Natural killer cell (primary cell): ENCODE measurements at regions of chr1 and their contacts with region 1.

Region 1: GRCh38 chr1:229625915-229626831 is at the starts of genes TAF5L and URB2:
- DNase-seq: peak; percentile 81 to 93
- ATAC-seq: peak; percentile 93 to 97 (median 93)
- H3K4me3 ChIP-seq: peak within 1 kb of the TSS; percentile 85
- H3K4me3 Mint-ChIP-seq: peak within 1 kb of the TSS; percentile 99
- H3K27ac ChIP-seq: peak within 1 kb of the TSS; percentile 59
- H3K27ac Mint-ChIP-seq: peak within 1 kb of the TSS; percentile 88 to 94
- H3K4me1 ChIP-seq: peaks cover 16% of the 10 kb centered on the region
- H3K4me1 Mint-ChIP-seq: peaks cover 39 to 41% of the 10 kb centered on the region in 2 donors
- H3K27me3 ChIP-seq: no peaks in the 10 kb centered on the region
- H3K27me3 Mint-ChIP-seq: no peaks in the 10 kb centered on the region
- CTCF ChIP-seq: no peak
- total RNA-seq, gene TAF5L: 21.6 to 37.9 (median 32.7) TPM
- total RNA-seq, gene URB2: 5.5 to 10.4 (median 9.8) TPM

Region 2: GRCh38 chr1:229341774-229342655 is 284.2 kb before region 1 on chr1:
- intact Hi-C with region 1: loop called (anchors 2 kb)
- DNase-seq: peak; percentile 76 to 88
- ATAC-seq: peak; percentile 86 to 93 (median 86)
- H3K4me3 ChIP-seq: peak overlapping the region; percentile 60
- H3K4me3 Mint-ChIP-seq: peak overlapping the region; percentile 93
- H3K27ac ChIP-seq: peak overlapping the region; percentile 41
- H3K27ac Mint-ChIP-seq: peak overlapping the region; percentile 73 to 81
- H3K4me1 ChIP-seq: peaks cover 21% of the 10 kb centered on the region
- H3K4me1 Mint-ChIP-seq: peaks cover 39% of the 10 kb centered on the region in 2 donors
- H3K27me3 ChIP-seq: no peaks in the 10 kb centered on the region
- H3K27me3 Mint-ChIP-seq: peaks cover 6 to 13% of the 10 kb centered on the region in 2 donors
- CTCF ChIP-seq: no peak

Region 3: DNA sequence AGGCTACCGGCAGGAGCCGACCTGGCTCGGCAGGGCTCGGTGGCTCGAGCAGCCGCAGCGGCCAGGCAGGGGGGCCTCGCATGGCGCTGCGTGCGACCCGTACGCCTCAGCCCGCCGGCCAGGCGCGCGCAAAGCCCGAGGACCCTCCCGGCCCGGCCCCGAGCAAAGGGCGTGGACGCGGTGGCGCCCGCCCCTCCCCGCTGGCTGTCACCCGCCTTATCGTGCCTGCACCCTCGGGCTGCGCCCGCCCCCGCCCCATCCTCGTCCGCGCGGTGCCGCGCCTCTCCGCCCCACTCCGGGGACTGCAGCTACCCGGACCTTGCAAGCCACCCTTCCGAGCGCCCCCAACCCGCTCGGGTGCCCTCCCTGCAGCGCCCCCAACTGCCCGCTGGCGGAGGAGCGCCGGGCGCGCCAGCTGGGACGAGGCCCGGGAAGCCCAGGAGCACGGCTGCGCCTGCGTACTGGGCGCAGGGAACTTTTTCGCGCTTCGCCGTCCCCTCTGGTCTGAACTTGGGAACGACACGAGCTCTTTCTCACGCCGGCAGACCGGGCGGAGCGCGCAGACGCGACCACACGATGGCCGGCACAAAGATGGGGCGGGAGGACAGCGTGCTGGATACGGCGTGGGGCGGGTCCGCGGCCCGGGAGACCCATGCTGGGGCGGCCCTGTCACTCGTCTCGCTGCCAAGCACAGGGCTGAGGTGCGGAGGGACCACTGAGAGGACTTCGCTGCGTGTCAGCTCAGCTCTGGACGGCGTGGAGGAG is 67.4 kb before region 1 on chr1 and contains the start of gene ABCB10:
- intact Hi-C with region 1: loop called (anchors 5 kb)
- DNase-seq: peak; percentile 70 to 92
- ATAC-seq: peak; percentile 72 to 86 (median 80)
- H3K4me3 ChIP-seq: peak within 1 kb of the TSS; percentile 54
- H3K4me3 Mint-ChIP-seq: peak within 1 kb of the TSS; percentile 94
- H3K27ac ChIP-seq: peak within 1 kb of the TSS; percentile 54
- H3K27ac Mint-ChIP-seq: peak within 1 kb of the TSS; percentile 82 to 90
- H3K4me1 ChIP-seq: peaks cover 22% of the 10 kb centered on the region
- H3K4me1 Mint-ChIP-seq: peaks cover 36 to 39% of the 10 kb centered on the region in 2 donors
- H3K27me3 ChIP-seq: no peaks in the 10 kb centered on the region
- H3K27me3 Mint-ChIP-seq: no peaks in the 10 kb centered on the region
- CTCF ChIP-seq: peak; percentile 42
- total RNA-seq, gene ABCB10: 22.0 to 23.3 (median 22.0) TPM

Region 4: DNA sequence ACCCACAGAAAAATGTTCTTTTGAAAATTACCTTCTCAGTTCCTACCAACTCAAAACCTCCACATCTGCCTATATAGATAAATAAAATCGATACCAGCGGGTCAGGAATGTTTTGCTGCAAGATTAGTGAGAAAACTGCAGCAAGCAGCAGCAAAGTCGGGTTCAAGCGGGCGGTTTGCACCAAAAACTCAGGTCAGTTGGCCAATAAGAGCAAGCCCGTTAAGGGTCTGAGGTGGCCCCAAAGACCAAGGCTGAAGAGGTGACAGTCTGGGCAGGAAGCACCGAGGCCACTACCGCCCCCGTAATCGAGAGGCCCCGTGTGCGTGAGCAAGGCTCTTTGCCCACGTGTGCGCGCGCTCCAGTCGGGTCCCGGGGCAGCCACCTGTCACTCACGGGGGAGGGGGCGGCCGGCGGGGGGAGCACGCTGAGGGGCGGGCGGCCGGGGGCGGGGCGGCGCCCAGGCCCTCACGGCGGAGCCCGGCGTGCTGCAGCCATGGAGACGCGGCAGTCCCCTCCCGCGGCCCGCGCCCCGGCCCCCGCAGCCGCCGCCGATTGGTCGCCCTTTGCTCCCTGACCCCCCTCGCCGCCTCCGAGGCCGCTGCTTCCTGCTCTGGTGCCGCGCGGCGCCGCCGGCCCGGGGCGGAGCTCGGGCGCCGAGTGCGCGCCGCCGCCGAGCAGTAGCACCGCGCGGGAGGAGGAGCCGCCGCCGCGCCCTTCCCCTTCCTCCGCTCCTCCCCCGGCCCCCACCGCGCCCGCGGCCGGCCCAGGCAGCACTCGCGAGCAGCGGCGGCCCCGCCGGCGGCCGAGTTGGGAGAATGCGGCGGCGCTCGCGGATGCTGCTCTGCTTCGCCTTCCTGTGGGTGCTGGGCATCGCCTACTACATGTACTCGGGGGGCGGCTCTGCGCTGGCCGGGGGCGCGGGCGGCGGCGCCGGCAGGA is 440.6 kb after region 1 on chr1 and contains the start of gene GALNT2:
- intact Hi-C with region 1: loop called (anchors 2 kb)
- DNase-seq: peak; percentile 88 to 95
- ATAC-seq: peak; percentile 88 to 97 (median 90)
- H3K4me3 ChIP-seq: peak within 1 kb of the TSS; percentile 81
- H3K4me3 Mint-ChIP-seq: peak within 1 kb of the TSS; percentile 91
- H3K27ac ChIP-seq: peak within 1 kb of the TSS; percentile 86
- H3K27ac Mint-ChIP-seq: peak within 1 kb of the TSS; percentile 85 to 90
- H3K4me1 ChIP-seq: peaks cover 14% of the 10 kb centered on the region
- H3K4me1 Mint-ChIP-seq: peaks cover 31 to 33% of the 10 kb centered on the region in 2 donors
- H3K27me3 ChIP-seq: no peaks in the 10 kb centered on the region
- H3K27me3 Mint-ChIP-seq: peaks cover 0 to 4% of the 10 kb centered on the region in 2 donors
- CTCF ChIP-seq: no peak
- total RNA-seq, gene GALNT2: 31.2 to 53.6 (median 47.3) TPM

Region 5: DNA sequence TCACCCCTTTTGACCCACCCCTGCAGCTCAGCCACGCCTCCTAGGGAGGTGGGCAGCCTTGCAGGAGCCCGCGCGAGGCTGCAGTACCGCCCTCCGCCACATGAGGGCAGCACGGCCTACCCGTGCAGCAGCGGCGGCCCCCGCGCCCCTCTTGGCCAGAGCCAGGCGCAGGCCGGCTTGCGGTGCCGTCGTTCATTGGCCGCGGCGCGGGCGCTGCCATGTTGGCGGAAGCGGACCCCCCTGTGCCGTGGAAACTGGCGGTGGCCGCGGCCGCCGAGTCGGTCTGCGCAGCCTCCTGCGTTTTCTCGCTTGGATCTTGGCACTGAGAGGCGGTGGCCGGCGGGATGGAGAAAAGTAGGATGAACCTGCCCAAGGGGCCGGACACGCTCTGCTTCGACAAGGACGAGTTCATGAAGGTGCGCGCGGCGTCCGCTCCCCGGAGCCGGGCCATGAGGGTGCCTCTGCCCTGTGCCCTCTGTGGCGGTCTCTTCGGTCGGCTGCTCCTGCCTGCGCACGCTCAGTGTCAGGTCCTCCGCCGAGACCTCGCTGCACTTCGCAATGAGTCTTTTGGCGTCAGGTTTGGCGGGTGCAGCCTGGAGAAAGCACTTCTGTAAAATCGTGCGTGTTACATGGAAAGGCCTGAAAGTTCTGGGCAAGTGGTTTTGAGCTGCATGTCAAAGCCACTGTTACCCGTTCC is 1016.2 kb after region 1 on chr1 and contains the start of gene COG2:
- intact Hi-C with region 1: loop called (anchors 10 kb)
- DNase-seq: peak; percentile 96 to 99
- ATAC-seq: peak; percentile 91 to 99 (median 92)
- H3K4me3 ChIP-seq: peak within 1 kb of the TSS; percentile 77
- H3K4me3 Mint-ChIP-seq: peak within 1 kb of the TSS; percentile 98
- H3K27ac ChIP-seq: peak within 1 kb of the TSS; percentile 77
- H3K27ac Mint-ChIP-seq: peak within 1 kb of the TSS; percentile 93 to 95
- H3K4me1 ChIP-seq: peaks cover 21% of the 10 kb centered on the region
- H3K4me1 Mint-ChIP-seq: peaks cover 43 to 52% of the 10 kb centered on the region in 2 donors
- H3K27me3 ChIP-seq: peaks cover 5% of the 10 kb centered on the region
- H3K27me3 Mint-ChIP-seq: peaks cover 17 to 21% of the 10 kb centered on the region in 2 donors
- CTCF ChIP-seq: peak; percentile 100
- total RNA-seq, gene COG2: 15.8 to 24.1 (median 17.5) TPM